Mucosa of descending colon (tissue), 3 donors: ENCODE measurements at regions of chr3 and their contacts with region 1.

Region 1: DNA sequence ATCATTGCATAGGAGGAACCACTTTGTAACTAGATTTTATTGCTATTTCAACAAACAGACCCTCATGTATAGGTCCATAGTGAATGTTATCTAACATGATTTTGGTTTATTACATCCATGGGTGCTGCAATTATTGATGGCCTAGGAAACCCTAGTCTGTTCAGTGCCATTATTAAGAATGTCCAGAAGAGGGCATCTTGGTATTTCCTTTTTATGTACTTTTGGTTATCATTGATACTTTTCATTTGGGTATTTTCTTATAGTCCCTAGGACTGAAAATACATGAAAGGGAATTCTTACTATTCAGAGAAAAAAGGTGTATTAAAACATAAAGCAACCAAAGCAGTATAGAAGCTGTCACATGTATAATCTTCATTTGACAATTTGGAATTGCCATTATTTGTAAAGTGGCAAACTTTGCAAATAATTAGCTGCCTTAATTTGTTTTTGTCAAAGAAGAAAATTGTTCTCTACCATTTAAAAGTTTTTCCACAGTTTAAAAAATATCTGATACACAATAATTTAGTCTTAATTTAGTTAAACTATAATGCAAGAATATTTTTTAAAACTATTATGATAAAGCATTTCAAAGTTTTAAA is 48.7 kb downstream of the CNOT10 start:
- DNase-seq: no peak
- ATAC-seq: no peak
- H3K4me3 ChIP-seq: no peak overlapping the region
- H3K4me1 ChIP-seq: no peaks in the 10 kb centered on the region
- CTCF ChIP-seq: no peak

Region 2: GRCh38 chr3:32934150-32934742 is 200.5 kb after region 1 on chr3:
- intact Hi-C with region 1: loop called in 1 of 2 experiments (anchors 10 kb)
- DNase-seq: peak in 1 of 3 donors; percentile 62
- ATAC-seq: no peak
- H3K4me3 ChIP-seq: no peak overlapping the region
- H3K4me1 ChIP-seq: no peaks in the 10 kb centered on the region
- CTCF ChIP-seq: peak; percentile 37